Activated CD4-positive, alpha-beta T cell treated with anti-CD3 and anti-CD28 coated beads for 36 hours (primary cell): ENCODE measurements at regions of chr7 and their contacts with region 1.

Region 1: DNA sequence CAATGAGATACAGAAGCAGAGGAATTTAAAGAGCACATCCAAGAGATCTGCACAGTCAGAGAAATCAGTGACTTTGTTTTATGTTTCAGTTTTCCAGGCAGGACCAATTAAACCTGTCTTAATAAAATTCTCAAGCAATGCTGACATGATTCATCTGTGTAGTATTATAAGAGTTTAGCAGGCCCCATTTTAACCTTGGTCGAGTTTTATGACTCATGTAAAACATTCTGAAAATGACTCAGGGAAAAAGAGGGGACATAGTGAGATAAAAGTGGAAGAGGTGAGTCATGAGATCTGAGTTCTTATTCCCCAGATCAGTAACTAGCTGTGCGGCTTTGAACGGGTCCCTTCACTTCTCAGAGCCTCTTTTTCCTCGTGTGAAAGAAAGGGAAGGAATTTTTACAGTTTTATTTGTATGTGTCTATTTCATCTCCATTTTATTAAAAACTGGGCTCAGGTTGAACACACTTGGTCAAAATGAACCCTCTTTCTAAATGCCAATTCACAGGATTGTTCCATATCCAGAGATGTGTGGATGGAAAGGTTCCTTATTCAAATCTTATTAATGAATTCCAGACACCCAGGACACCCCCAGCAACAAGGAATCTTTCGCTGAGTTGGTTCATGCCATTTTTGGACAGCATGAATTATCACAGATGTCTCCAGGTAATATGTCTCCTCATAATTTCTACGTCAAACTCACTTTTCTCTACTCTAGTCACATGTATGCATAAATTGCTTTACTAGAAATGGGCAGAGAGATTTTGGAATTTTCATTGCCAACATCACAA is 143.2 kb downstream of the JAZF1 start:
- DNase-seq: peak; percentile 56
- ATAC-seq: peak; percentile 91
- H3K4me3 Mint-ChIP-seq: peak overlapping the region; percentile 12
- H3K27ac Mint-ChIP-seq: no peak overlapping the region
- H3K4me1 Mint-ChIP-seq: peaks cover 36% of the 10 kb centered on the region
- H3K27me3 Mint-ChIP-seq: peaks cover 10% of the 10 kb centered on the region

Region 2: DNA sequence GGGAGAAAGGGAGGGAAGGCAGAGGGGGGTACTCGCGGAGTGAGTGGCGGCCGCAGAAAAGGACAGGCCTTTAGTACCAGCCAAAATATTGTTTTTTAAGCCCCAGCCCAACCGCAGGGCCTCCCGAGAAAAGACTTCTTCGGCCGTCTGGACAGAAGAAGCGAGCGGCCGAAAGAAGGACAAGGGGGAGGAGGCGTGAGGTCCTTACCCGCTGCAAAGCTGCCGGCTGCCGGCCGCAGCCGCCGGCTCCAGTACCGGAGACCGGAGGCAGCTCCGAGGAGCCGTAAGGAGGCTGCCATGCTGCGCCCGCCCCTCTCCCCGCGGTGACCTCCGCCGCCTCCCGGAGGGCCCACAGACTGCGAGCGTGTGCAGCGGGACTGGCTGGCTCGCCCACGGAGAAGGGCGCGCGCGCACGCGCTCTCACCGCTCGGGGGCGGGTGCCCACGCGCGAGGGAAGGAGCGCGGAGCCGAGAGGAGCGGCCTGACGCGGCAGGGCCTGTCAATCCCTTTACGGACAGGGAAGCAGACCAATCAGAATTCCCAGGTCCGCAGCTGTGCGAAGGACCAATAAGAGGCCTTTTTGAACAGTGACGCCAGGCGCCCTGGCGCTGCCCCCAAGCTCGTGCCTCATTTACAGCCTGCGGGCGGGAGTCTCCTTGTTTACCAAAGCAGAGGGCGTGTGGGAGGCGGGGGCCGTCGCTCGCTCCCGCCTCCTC is 374.8 kb before region 1 on chr7 and contains the start of gene HIBADH:
- CTCF ChIA-PET with region 1: no interaction called
- POLR2A ChIA-PET with region 1: no interaction called
- intact Hi-C with region 1: loop called in 1 of 2 experiments (anchors 2 kb)
- DNase-seq: peak; percentile 95
- ATAC-seq: peak; percentile 99
- H3K4me3 Mint-ChIP-seq: peak within 1 kb of the TSS; percentile 82
- H3K27ac Mint-ChIP-seq: peak within 1 kb of the TSS; percentile 74
- H3K4me1 Mint-ChIP-seq: peaks cover 8% of the 10 kb centered on the region
- H3K27me3 Mint-ChIP-seq: no peaks in the 10 kb centered on the region
- total RNA-seq, gene HIBADH: 20.3 to 20.5 TPM

Region 3: DNA sequence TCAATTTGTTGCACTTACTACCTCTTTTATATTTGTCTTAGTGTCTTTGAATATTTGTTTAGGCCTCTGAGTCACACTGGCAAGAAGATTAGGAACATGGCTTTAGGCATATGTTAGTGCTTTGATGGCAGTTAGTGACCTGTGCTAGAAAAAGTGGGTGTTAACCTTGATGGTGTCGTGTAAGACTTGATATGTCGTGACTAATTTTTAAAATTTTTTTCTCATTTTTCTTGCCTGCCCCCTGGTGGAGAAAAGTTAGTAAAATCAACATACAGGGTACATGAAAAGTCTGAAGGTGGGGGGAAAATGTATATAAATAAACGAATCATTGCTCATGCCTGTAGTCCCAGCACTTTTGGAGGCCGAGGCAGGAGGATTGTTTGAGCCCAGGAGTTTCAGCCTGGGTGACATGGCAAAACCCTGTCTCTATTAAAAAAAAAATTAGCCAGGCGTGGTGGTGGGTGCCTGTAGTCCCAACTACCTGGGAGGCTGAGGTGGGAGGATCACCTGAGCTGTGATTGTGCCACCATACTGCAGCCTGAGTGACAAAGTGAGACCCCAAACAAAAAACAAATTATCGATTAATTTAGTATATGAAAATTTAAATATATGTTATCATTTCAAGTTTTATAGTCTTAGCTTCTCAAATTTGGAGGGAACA is 252.9 kb before region 1 on chr7:
- CTCF ChIA-PET with region 1: interaction called, 3 read pairs
- POLR2A ChIA-PET with region 1: no interaction called
- intact Hi-C with region 1: loop called (anchors 1 to 2 kb)
- DNase-seq: peak; percentile 18
- ATAC-seq: peak; percentile 77
- H3K4me3 Mint-ChIP-seq: no peak overlapping the region
- H3K27ac Mint-ChIP-seq: no peak overlapping the region
- H3K4me1 Mint-ChIP-seq: peaks cover 31% of the 10 kb centered on the region
- H3K27me3 Mint-ChIP-seq: no peaks in the 10 kb centered on the region

Region 4: GRCh38 chr7:28292834-28293526 is 255.6 kb after region 1 on chr7:
- CTCF ChIA-PET with region 1: no interaction called
- POLR2A ChIA-PET with region 1: no interaction called
- intact Hi-C with region 1: loop called in 1 of 2 experiments (anchors 2 kb)
- DNase-seq: peak; percentile 22
- ATAC-seq: peak; percentile 92
- H3K4me3 Mint-ChIP-seq: no peak overlapping the region
- H3K27ac Mint-ChIP-seq: no peak overlapping the region
- H3K4me1 Mint-ChIP-seq: peaks cover 21% of the 10 kb centered on the region
- H3K27me3 Mint-ChIP-seq: peaks cover 19% of the 10 kb centered on the region

Region 5: GRCh38 chr7:28442540-28443420 is 405.4 kb after region 1 on chr7:
- CTCF ChIA-PET with region 1: no interaction called
- POLR2A ChIA-PET with region 1: no interaction called
- intact Hi-C with region 1: loop called (anchors 2 kb)
- DNase-seq: peak; percentile 10
- ATAC-seq: peak; percentile 84
- H3K4me3 Mint-ChIP-seq: no peak overlapping the region
- H3K27ac Mint-ChIP-seq: no peak overlapping the region
- H3K4me1 Mint-ChIP-seq: peaks cover 16% of the 10 kb centered on the region
- H3K27me3 Mint-ChIP-seq: peaks cover 48% of the 10 kb centered on the region